K562 (cell line): ENCODE measurements at regions of chr3 and their contacts with region 1.

Region 1: GRCh38 chr3:180802837-180803236 is 109.6 kb upstream of the FXR1 start:
- DNase-seq: peak in 2 of 4 experiments; percentile 14 to 15
- ATAC-seq: peak; percentile 69; the same call in 2 of the 3 replicates
- H3K4me3 ChIP-seq: no peak overlapping the region
- H3K27ac ChIP-seq: no peak overlapping the region
- H3K4me1 ChIP-seq: no peaks in the 10 kb centered on the region
- H3K27me3 ChIP-seq: no peaks in the 10 kb centered on the region
- CTCF ChIP-seq: peak; percentile 36 to 64 (median 38); a peak in 4 of 6 replicates
- EP300 ChIP-seq: no peak
- POLR2A ChIP-seq: no peak
- RAD21 ChIP-seq: peak; percentile 61 to 63

Region 2: GRCh38 chr3:180912304-180913296 is 109.8 kb after region 1 on chr3 and contains the start of gene FXR1:
- CTCF ChIA-PET with region 1: no interaction called
- POLR2A ChIA-PET with region 1: no interaction called
- in situ Hi-C with region 1: no loop called
- intact Hi-C with region 1: loop called (anchors 5 kb)
- DNase-seq: peak; percentile 87 to 91 (median 90)
- ATAC-seq: peak; percentile 96
- H3K4me3 ChIP-seq: peak within 1 kb of the TSS; percentile 99
- H3K27ac ChIP-seq: peak within 1 kb of the TSS; percentile 100
- H3K4me1 ChIP-seq: peaks cover 3 to 12% of the 10 kb centered on the region in 2 experiments; a peak in 3 of 5 replicates
- H3K27me3 ChIP-seq: no peaks in the 10 kb centered on the region
- CTCF ChIP-seq: peak; percentile 49 to 70 (median 50); a peak in 5 of 6 replicates
- EP300 ChIP-seq: no peak
- POLR2A ChIP-seq: peak; percentile 95
- RAD21 ChIP-seq: peak in 1 of 2 experiments; percentile 20; a peak in 1 of 4 replicates
- polyA plus RNA-seq, gene FXR1: 59.4 to 81.1 TPM

Region 3: GRCh38 chr3:181075098-181075497 is 272.3 kb after region 1 on chr3:
- CTCF ChIA-PET with region 1: no interaction called
- POLR2A ChIA-PET with region 1: no interaction called
- in situ Hi-C with region 1: no loop called
- intact Hi-C with region 1: loop called (anchors 10 kb)
- DNase-seq: no peak
- ATAC-seq: no peak
- H3K4me3 ChIP-seq: no peak overlapping the region
- H3K27ac ChIP-seq: no peak overlapping the region
- H3K4me1 ChIP-seq: no peaks in the 10 kb centered on the region
- H3K27me3 ChIP-seq: no peaks in the 10 kb centered on the region
- CTCF ChIP-seq: no peak
- EP300 ChIP-seq: no peak
- POLR2A ChIP-seq: no peak
- RAD21 ChIP-seq: no peak

Region 4: GRCh38 chr3:181700168-181701087 is 897.6 kb after region 1 on chr3:
- CTCF ChIA-PET with region 1: no interaction called
- POLR2A ChIA-PET with region 1: no interaction called
- in situ Hi-C with region 1: no loop called
- intact Hi-C with region 1: loop called (anchors 2 kb)
- DNase-seq: peak; percentile 72 to 75 (median 73)
- ATAC-seq: peak; percentile 88
- H3K4me3 ChIP-seq: no peak overlapping the region
- H3K27ac ChIP-seq: no peak overlapping the region
- H3K4me1 ChIP-seq: peaks cover 0 to 13% of the 10 kb centered on the region in 2 experiments; a peak in 2 of 5 replicates
- H3K27me3 ChIP-seq: peaks cover 11 to 27% of the 10 kb centered on the region in 2 experiments; a peak in 4 of 5 replicates
- CTCF ChIP-seq: peak; percentile 74 to 80 (median 77)
- EP300 ChIP-seq: no peak
- POLR2A ChIP-seq: no peak
- RAD21 ChIP-seq: peak; percentile 32 to 54; a peak in 3 of 4 replicates